Endothelial cell of umbilical vein (primary cell): ENCODE measurements at regions of chr16 and their contacts with region 1.

Region 1: GRCh38 chr16:74862741-74863244 is 88.2 kb upstream of the FA2H start:
- DNase-seq: peak; percentile 61
- H3K4me3 ChIP-seq: no peak overlapping the region
- H3K27ac ChIP-seq: no peak overlapping the region
- H3K4me1 ChIP-seq: peaks cover 3% of the 10 kb centered on the region
- H3K27me3 ChIP-seq: peaks cover 0 to 1% of the 10 kb centered on the region in 2 experiments
- CTCF ChIP-seq: peak; percentile 54 to 59
- POLR2A ChIP-seq: no peak

Region 2: DNA sequence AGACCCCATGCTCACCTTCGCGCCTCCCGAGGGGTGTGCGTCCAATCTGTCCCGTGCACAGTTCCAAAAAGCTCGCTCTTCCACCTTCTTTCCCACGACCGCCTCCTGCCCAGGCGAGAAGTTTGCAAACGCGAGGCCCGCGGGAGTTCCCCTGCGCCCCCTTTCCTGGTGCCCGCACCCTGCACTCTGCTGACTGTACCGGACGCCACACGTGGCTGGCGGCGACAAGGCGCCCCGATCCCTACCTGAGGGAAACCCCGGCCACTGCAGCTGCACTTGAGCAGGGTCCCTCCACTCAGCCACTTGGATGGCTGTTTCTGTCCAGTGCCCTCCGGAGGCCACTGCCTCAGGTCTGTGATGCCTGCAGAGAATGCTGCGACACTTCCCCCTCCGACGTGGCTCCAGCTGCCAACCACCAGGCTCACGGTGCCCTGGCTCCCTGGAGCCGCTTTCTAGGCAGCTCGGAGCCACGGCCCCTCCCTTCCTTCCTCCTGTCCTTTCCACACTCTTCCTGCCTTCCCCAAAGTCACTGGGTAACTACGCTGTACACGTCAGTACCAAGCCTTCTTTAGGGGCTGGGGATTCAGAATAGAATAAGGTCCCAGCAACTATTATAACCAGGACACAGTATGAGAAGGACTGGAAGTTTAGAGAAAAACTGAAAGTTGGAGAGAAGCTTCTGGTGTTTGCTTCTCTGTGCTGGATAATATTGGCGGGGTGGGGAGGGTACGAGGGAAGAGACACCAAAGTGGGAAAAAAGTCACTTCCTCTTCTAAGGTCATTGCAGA is 162.2 kb before region 1 on chr16 and contains the start of gene MLKL:
- CTCF ChIA-PET with region 1: interaction called, 93 read pairs
- POLR2A ChIA-PET with region 1: no interaction called
- dilution Hi-C with region 1: no loop called
- intact Hi-C with region 1: loop called (anchors 2 kb)
- DNase-seq: peak; percentile 69
- H3K4me3 ChIP-seq: peak within 1 kb of the TSS; percentile 59 to 85 (median 82)
- H3K27ac ChIP-seq: peak within 1 kb of the TSS; percentile 82
- H3K4me1 ChIP-seq: peaks cover 23% of the 10 kb centered on the region
- H3K27me3 ChIP-seq: no peaks in the 10 kb centered on the region
- CTCF ChIP-seq: peak in 1 of 2 donors; percentile 15
- POLR2A ChIP-seq: peak; percentile 75
- total RNA-seq, gene MLKL: 24.4 and 26.5 TPM in 2 replicates

Region 3: GRCh38 chr16:74774203-74775116 is 88.3 kb before region 1 on chr16 and contains the start of gene FA2H:
- CTCF ChIA-PET with region 1: interaction called, 33 read pairs
- POLR2A ChIA-PET with region 1: no interaction called
- dilution Hi-C with region 1: no loop called
- intact Hi-C with region 1: no loop called
- DNase-seq: peak; percentile 27
- H3K4me3 ChIP-seq: peak within 1 kb of the TSS in 1 of 3 experiments; percentile 13
- H3K27ac ChIP-seq: no peak within 1 kb of the TSS
- H3K4me1 ChIP-seq: peaks cover 4% of the 10 kb centered on the region
- H3K27me3 ChIP-seq: peaks cover 21 to 32% of the 10 kb centered on the region in 2 experiments
- CTCF ChIP-seq: peak; percentile 35 to 36
- POLR2A ChIP-seq: no peak
- total RNA-seq, gene FA2H: not detected in 2 replicates

Region 4: GRCh38 chr16:74837056-74837455 is 25.7 kb before region 1 on chr16:
- CTCF ChIA-PET with region 1: interaction called, 13 read pairs
- POLR2A ChIA-PET with region 1: no interaction called
- dilution Hi-C with region 1: no loop called
- intact Hi-C with region 1: no loop called
- DNase-seq: peak; percentile 32
- H3K4me3 ChIP-seq: no peak overlapping the region
- H3K27ac ChIP-seq: no peak overlapping the region
- H3K4me1 ChIP-seq: no peaks in the 10 kb centered on the region
- H3K27me3 ChIP-seq: peaks cover 0 to 3% of the 10 kb centered on the region in 2 experiments
- CTCF ChIP-seq: no peak
- POLR2A ChIP-seq: no peak

Region 5: GRCh38 chr16:74852500-74852875 is 10.3 kb before region 1 on chr16:
- CTCF ChIA-PET with region 1: interaction called, 24 read pairs
- POLR2A ChIA-PET with region 1: no interaction called
- dilution Hi-C with region 1: no loop called
- intact Hi-C with region 1: no loop called
- DNase-seq: no peak
- H3K4me3 ChIP-seq: no peak overlapping the region
- H3K27ac ChIP-seq: no peak overlapping the region
- H3K4me1 ChIP-seq: no peaks in the 10 kb centered on the region
- H3K27me3 ChIP-seq: peaks cover 0 to 4% of the 10 kb centered on the region in 2 experiments
- CTCF ChIP-seq: no peak
- POLR2A ChIP-seq: no peak

Region 6: DNA sequence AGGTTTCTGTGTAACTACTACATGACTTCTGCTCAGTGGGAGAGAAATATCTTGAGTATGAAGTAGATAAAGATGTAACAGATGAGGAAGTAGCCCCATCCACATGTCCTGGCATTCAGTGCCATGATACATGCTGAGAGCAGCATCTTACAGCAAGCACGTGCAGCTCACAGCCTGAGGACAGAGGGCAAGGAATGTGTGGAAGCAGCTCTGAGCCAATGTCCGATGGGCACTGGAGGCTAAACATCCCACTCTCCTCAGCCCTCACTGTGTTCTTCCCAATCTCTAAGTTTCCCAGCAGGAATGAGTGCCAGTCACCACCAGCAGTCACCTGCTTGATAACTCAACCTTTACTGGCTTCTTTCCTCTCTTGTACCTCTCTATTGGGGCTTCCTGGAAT is 530.1 kb after region 1 on chr16:
- CTCF ChIA-PET with region 1: no interaction called
- POLR2A ChIA-PET with region 1: no interaction called
- dilution Hi-C with region 1: no loop called
- intact Hi-C with region 1: no loop called
- DNase-seq: no peak
- H3K4me3 ChIP-seq: no peak overlapping the region
- H3K27ac ChIP-seq: no peak overlapping the region
- H3K4me1 ChIP-seq: no peaks in the 10 kb centered on the region
- H3K27me3 ChIP-seq: no peaks in the 10 kb centered on the region
- CTCF ChIP-seq: no peak
- POLR2A ChIP-seq: no peak